ENCODE measurements at regions of chr10 and their contacts with region 1.

Region 1: GRCh38 chr10:80464557-80465450 is 10.7 kb downstream of the TSPAN14 start:
- DNase-seq: no peak
- ATAC-seq: peak; percentile 16
- H3K4me3 Mint-ChIP-seq: peak overlapping the region; percentile 68
- H3K27ac Mint-ChIP-seq: peak overlapping the region; percentile 90
- H3K4me1 Mint-ChIP-seq: peaks cover 98% of the 10 kb centered on the region
- H3K27me3 Mint-ChIP-seq: no peaks in the 10 kb centered on the region

Region 2: DNA sequence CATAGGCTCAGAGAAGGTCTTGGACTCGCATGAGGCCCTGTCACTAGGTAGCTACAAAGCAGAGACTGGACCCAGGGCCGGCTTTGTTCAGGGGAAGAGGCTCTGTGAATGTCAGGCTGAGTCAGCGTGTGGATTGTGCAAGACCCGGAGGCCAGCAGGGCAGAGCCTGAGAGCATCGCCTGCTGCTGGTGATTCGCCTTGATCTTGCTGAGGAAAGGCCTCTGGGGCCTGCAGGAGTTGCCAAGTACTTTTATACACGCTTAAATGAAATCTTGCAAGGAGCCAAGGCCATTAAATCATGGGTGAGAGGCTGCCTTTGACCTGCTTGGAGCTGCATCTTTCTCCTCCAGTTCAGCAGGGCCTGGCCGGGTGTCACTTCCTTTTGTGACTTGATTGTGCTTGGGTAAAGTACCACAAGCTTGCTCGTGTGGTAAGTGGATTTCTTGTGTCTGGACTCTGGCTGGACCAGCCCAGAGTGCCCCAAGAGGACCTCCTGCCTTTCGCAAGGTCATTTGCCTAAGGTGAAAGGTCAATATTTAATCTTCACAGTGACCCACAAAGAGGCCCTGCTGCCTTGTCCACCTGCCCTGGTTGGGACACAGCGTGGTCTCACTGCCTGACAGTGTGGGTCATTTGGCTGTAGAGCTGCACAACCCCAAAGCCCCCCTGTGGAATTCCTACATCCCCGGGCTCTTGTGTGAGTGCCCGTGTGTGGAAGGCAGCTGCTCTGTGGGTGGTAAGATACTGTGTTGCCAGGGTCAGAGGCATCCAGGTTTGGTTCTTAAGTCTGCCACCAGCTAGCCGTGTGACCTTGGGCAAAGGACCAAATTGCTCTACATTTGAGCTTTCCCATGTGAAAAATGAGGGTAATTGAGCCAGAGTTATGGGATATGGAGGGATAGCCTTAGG is 34.3 kb after region 1 on chr10:
- CTCF ChIA-PET with region 1: interaction called, 1,113 read pairs
- POLR2A ChIA-PET with region 1: interaction called, 10 read pairs
- DNase-seq: peak; percentile 71
- ATAC-seq: peak; percentile 70
- H3K4me3 Mint-ChIP-seq: peak overlapping the region; percentile 64
- H3K27ac Mint-ChIP-seq: peak overlapping the region; percentile 90
- H3K4me1 Mint-ChIP-seq: peaks cover 97% of the 10 kb centered on the region
- H3K27me3 Mint-ChIP-seq: no peaks in the 10 kb centered on the region

Region 3: GRCh38 chr10:80659289-80659688 is 194.5 kb after region 1 on chr10:
- CTCF ChIA-PET with region 1: no interaction called
- POLR2A ChIA-PET with region 1: no interaction called
- DNase-seq: no peak
- ATAC-seq: no peak
- H3K4me3 Mint-ChIP-seq: no peak overlapping the region
- H3K27ac Mint-ChIP-seq: no peak overlapping the region
- H3K4me1 Mint-ChIP-seq: no peaks in the 10 kb centered on the region
- H3K27me3 Mint-ChIP-seq: peaks cover under 1% of the 10 kb centered on the region

Measured in activated CD8-positive, alpha-beta T cell treated with anti-CD3 and anti-CD28 coated beads, Interleukin-2, amount 10 ng/mL, durations not matched to agents 7 days and 5 days (primary cell).